Activated CD4-positive, alpha-beta T cell treated with anti-CD3 and anti-CD28 coated beads for 36 hours (primary cell): ENCODE measurements at regions of chr5 and their contacts with region 1.

Region 1: DNA sequence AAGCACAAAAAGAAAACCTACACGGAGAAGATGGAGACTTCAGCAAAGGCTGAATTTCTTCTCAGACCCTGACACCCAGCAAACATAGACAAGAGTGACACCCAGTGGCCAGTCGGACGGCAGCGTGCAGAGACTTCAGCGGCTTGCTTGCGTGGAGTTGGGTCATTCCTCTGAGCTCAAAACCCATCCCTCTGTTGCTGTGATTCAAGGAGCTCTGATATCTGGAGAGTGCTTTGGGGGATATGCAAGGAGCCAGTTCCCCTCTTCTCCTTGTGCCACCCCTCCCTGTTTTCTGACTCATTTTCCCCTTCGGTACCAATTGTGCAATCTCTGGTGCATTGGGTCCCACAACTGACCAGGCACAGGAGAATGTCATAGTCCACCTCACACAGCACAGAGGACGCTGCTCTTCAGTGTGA is 27.5 kb downstream of the SH3TC2 start:
- DNase-seq: peak; percentile 86
- ATAC-seq: peak; percentile 85
- H3K4me3 Mint-ChIP-seq: no peak overlapping the region
- H3K27ac Mint-ChIP-seq: no peak overlapping the region
- H3K4me1 Mint-ChIP-seq: peaks cover 18% of the 10 kb centered on the region
- H3K27me3 Mint-ChIP-seq: peaks cover 2% of the 10 kb centered on the region

Region 2: DNA sequence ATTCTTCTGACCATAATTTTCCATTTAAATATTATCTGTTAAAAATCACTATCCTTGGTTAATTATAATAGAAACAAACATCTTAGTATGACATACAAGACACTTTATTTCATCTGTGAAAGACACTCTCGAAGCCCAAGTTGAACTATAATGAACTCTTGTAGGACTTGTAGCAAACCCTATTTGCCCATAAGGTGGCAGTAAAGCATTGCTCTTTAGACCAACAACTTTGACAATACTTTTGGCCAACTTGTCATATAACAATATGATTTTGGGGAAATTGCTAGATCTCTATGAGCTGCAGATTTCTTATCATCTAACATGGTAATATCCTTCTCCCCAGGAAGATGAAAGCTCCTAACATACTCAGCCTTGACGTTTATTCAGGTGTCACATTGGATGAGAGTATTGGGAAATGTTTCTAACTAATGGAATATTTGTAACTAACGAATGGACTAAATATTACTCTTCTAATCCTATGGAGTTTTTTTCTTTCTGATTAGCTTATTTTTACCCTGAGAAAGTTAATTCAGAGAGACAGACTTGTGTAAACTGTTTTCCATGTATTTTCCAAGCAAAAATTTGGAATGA is 856.1 kb before region 1 on chr5:
- CTCF ChIA-PET with region 1: no interaction called
- POLR2A ChIA-PET with region 1: no interaction called
- intact Hi-C with region 1: loop called (anchors 5 kb)
- DNase-seq: no peak
- ATAC-seq: peak; percentile 53
- H3K4me3 Mint-ChIP-seq: no peak overlapping the region
- H3K27ac Mint-ChIP-seq: no peak overlapping the region
- H3K4me1 Mint-ChIP-seq: no peaks in the 10 kb centered on the region
- H3K27me3 Mint-ChIP-seq: peaks cover 17% of the 10 kb centered on the region

Region 3: DNA sequence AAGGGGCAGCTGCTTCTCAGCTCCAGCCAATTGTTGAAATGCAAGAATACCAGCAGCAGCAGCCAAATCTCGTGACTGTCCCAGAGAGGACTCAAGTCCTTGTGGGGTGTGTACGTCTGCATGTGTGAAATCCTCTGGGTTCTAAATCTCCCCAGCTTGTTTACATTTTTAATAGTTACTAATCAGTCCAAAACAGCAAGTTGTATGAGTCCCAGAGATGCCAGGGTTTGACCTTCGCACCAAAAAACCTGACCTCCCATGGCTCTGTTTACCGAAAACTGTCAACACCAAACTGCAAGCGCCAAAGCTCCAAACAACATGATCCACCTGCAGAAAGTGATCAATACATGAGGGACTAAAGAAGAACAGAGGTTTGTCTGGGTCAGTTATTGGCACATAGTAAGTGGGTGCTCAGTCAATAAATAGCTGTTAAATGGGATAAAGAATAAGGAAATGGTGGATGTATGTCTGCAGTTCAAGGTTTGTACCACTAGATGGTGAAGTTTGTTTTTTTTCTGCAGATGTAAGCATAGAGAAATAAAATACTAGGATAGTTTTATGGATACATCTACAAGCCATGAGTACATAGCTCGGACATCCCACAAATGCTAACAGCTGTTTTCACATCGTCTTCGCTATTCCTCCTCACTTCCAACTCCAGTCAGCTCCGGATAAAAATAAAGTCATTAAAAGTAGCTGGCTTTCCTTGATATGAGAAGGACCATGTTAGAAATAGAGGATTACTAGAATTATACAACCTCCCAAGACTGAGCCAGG is 294.2 kb before region 1 on chr5:
- CTCF ChIA-PET with region 1: interaction called, 356 read pairs
- POLR2A ChIA-PET with region 1: no interaction called
- intact Hi-C with region 1: loop called in 1 of 2 experiments (anchors 1 kb)
- DNase-seq: no peak
- ATAC-seq: no peak
- H3K4me3 Mint-ChIP-seq: no peak overlapping the region
- H3K27ac Mint-ChIP-seq: no peak overlapping the region
- H3K4me1 Mint-ChIP-seq: no peaks in the 10 kb centered on the region
- H3K27me3 Mint-ChIP-seq: peaks cover 13% of the 10 kb centered on the region

Region 4: DNA sequence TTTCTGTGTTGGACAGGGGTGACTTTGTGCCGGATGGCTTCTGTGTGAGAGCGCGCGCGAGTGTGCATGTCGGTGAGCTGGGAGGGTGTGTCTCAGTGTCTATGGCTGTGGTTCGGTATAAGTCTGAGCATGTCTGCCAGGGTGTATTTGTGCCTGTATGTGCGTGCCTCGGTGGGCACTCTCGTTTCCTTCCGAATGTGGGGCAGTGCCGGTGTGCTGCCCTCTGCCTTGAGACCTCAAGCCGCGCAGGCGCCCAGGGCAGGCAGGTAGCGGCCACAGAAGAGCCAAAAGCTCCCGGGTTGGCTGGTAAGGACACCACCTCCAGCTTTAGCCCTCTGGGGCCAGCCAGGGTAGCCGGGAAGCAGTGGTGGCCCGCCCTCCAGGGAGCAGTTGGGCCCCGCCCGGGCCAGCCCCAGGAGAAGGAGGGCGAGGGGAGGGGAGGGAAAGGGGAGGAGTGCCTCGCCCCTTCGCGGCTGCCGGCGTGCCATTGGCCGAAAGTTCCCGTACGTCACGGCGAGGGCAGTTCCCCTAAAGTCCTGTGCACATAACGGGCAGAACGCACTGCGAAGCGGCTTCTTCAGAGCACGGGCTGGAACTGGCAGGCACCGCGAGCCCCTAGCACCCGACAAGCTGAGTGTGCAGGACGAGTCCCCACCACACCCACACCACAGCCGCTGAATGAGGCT is 209.2 kb before region 1 on chr5 and contains the start of gene ADRB2:
- CTCF ChIA-PET with region 1: interaction called, 4 read pairs
- POLR2A ChIA-PET with region 1: no interaction called
- intact Hi-C with region 1: loop called (anchors 1 to 10 kb)
- DNase-seq: peak; percentile 89
- ATAC-seq: peak; percentile 95
- H3K4me3 Mint-ChIP-seq: peak within 1 kb of the TSS; percentile 66
- H3K27ac Mint-ChIP-seq: peak within 1 kb of the TSS; percentile 3
- H3K4me1 Mint-ChIP-seq: peaks cover 22% of the 10 kb centered on the region
- H3K27me3 Mint-ChIP-seq: peaks cover 30% of the 10 kb centered on the region
- total RNA-seq, gene ADRB2: 0.09 TPM in 1 of 2 experiments, not detected in the other

Region 5: DNA sequence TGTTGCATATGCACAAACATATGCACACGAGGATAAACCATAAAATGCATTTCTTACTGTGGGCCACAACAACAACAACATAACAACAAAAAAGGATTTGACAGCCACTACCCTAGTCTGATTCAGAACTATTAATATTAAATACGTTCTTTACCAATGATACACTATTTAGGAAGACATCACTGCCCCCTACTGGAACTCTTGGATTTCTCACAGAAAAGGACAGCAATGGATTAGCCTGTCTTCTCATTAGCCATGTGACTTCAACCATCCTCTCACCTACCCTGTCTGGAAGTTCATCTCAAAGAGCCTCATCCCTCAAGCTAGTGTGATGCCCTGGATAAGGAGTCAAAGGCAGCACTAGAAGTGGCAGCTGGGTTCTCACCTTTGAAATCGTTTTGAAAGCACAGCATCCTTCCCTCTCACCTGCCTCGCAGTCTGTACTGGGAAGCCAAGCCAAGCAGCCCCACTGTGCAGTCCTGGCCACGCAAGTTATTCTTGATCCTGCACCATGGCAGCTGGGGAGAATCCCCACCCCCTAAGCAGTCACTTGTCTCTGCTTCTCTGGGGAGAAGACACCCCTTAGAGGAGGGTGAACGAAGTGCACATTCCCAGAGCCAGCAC is 37.1 kb before region 1 on chr5:
- CTCF ChIA-PET with region 1: interaction called, 13 read pairs
- POLR2A ChIA-PET with region 1: no interaction called
- intact Hi-C with region 1: loop called in 1 of 2 experiments (anchors 2 kb)
- DNase-seq: peak; percentile 15
- ATAC-seq: peak; percentile 66
- H3K4me3 Mint-ChIP-seq: no peak overlapping the region
- H3K27ac Mint-ChIP-seq: no peak overlapping the region
- H3K4me1 Mint-ChIP-seq: no peaks in the 10 kb centered on the region
- H3K27me3 Mint-ChIP-seq: peaks cover 27% of the 10 kb centered on the region

Region 6: DNA sequence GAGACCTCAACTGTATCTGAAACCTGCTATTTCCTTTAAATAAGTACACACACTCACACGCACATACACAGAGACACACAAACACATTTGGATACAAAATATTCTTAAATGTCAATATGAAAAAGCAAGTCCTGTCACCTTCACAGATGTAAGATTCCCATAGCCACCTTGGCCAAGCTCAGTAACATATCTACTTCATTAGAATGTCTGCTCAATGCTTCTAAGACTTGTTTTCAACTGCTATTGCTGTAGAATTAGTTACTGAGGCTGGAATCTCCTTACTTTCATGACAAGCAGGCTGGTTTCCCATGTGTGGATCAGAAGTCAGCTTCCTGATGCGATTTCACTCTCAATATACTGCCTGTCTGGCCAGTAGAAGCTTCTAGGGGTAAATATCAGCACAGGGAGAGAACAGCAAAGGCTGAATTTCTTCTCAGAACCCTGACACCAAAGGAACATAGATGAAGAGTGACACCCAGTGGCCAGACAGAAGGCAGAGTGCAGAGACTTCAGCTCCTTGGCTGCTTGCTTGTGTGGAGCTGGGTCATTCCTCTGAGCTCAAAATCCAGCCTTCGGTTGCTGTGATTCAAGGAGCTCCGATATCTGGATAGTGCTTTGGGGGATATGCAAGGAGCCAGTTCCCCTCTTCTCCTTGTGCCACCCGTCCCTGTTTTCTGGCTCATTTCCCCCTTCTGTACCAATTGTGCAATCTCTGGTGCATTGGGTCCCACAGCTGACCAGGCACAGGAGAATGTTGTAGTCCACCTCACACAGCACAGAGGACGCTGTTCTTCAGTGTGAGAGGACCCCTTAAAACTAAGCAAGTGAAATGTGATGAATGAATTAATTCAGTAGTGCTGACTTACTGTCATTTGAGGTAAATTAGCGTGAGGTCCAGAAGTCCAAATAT is 79.3 kb after region 1 on chr5:
- CTCF ChIA-PET with region 1: interaction called, 21 read pairs
- POLR2A ChIA-PET with region 1: no interaction called
- intact Hi-C with region 1: loop called (anchors 2 to 10 kb)
- DNase-seq: peak; percentile 68
- ATAC-seq: peak; percentile 78
- H3K4me3 Mint-ChIP-seq: no peak overlapping the region
- H3K27ac Mint-ChIP-seq: no peak overlapping the region
- H3K4me1 Mint-ChIP-seq: peaks cover 3% of the 10 kb centered on the region
- H3K27me3 Mint-ChIP-seq: peaks cover 18% of the 10 kb centered on the region